ENCODE measurements at regions of chr12 and their contacts with region 1.

Region 1: DNA sequence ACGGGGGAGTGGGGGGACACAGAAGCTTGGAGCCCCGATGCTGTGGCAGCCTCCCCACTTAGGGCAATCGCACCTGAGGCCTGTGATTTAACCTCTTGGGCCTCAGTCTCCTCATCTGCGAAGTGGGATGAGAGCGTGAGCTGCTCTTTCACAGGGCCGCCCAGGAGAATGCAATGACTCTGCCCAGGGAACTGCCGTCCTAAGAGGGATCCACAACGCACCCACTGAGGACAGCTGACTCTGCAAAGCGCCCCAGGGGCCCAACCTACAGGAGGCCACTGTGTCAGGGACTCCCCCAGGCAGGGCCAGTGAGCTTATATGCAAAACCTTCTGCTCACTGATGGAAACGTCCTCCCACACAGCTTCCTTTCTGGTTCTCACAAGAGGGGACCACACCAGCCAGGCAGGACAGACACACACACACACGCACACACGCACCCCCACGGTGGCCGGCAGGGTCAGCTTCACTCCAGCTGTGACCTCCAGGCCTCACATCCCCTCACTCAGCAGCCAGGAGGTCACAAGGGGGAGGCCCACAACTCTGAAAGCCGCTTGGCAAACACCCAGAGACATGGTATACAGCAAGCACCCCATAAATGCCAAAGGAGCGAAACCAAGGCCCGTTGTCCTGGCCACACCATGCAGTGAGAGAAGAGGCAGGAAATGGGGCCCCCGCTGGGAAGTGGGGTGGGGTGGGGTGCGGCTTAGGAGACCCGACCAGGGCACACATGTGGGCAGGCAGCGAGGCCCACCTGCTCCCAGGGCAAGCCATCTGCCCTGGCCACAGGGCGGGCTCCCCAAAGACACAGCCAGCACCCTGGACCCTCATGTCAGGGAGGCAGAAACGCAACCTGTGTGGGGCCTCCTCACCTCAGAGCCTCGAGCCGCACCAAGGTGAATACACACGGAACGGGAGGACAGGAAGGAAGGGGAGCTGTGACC is 73.3 kb downstream of the NCOR2 start:
- DNase-seq: peak; percentile 59
- ATAC-seq: peak; percentile 96
- H3K4me3 Mint-ChIP-seq: peak overlapping the region; percentile 76
- H3K27ac Mint-ChIP-seq: peak overlapping the region; percentile 83
- H3K4me1 Mint-ChIP-seq: peaks cover 69% of the 10 kb centered on the region
- H3K27me3 Mint-ChIP-seq: no peaks in the 10 kb centered on the region
- CTCF ChIP-seq: no peak

Region 2: DNA sequence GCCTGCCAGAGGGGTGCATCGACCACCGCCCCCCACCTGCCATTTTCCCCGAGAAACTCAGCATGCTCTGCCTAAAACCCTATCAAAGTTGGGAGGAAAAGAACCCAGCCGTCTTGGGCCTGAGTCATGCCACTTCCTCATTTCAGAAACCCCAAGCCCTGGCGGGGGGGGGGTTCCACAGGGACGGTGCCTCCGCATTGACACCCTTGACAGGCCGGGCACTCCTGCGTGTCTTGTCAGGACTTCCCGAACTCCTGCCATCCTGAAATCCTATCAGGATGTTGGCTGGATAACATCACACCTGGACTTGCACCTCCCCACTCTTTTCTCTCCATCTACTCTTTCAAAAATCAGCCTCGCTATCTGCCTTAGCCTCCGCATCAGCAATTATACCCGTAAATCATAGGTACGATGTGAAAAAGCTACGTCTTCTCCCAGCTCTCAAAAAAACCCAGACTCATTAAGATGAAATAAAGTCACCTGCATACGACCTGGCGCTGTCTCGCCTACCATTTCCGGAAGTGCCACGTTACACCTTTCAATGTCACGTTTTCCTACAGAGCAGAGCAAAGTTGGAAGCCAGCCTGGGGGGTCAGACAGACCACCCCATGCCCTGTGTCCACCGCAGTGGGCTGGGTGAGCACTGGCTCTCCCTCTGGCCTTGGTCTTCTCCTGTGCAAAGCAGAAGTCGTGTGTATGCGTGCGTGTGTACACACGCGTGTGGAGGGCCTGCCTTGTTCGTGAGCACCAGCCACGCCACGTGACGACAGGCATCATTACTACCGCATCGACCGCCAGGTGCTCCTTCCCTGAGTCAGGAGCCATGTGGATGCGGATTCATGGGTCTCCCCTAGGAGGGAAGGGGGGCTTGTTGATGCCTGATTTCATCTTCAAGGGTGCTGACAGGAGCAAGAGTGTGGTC is 102.5 kb before region 1 on chr12:
- CTCF ChIA-PET with region 1: no interaction called
- POLR2A ChIA-PET with region 1: interaction called, 9 read pairs
- intact Hi-C with region 1: loop called (anchors 1 kb)
- DNase-seq: peak; percentile 73
- ATAC-seq: peak; percentile 77
- H3K4me3 Mint-ChIP-seq: peak overlapping the region; percentile 83
- H3K27ac Mint-ChIP-seq: peak overlapping the region; percentile 79
- H3K4me1 Mint-ChIP-seq: peaks cover 47% of the 10 kb centered on the region
- H3K27me3 Mint-ChIP-seq: no peaks in the 10 kb centered on the region
- CTCF ChIP-seq: no peak

Region 3: GRCh38 chr12:124466216-124467128 is 27.6 kb before region 1 on chr12:
- CTCF ChIA-PET with region 1: interaction called, 3 read pairs
- POLR2A ChIA-PET with region 1: interaction called, 15 read pairs
- intact Hi-C with region 1: loop called (anchors 1 kb)
- DNase-seq: peak; percentile 79
- ATAC-seq: peak; percentile 97
- H3K4me3 Mint-ChIP-seq: peak overlapping the region; percentile 71
- H3K27ac Mint-ChIP-seq: peak overlapping the region; percentile 77
- H3K4me1 Mint-ChIP-seq: peaks cover 55% of the 10 kb centered on the region
- H3K27me3 Mint-ChIP-seq: no peaks in the 10 kb centered on the region
- CTCF ChIP-seq: no peak

Region 4: GRCh38 chr12:124477107-124477915 is 16.8 kb before region 1 on chr12:
- CTCF ChIA-PET with region 1: interaction called, 4 read pairs
- POLR2A ChIA-PET with region 1: interaction called, 8 read pairs
- intact Hi-C with region 1: loop called (anchors 1 kb)
- DNase-seq: no peak
- ATAC-seq: peak; percentile 68
- H3K4me3 Mint-ChIP-seq: peak overlapping the region; percentile 57
- H3K27ac Mint-ChIP-seq: peak overlapping the region; percentile 75
- H3K4me1 Mint-ChIP-seq: peaks cover 55% of the 10 kb centered on the region
- H3K27me3 Mint-ChIP-seq: no peaks in the 10 kb centered on the region
- CTCF ChIP-seq: no peak

Region 5: DNA sequence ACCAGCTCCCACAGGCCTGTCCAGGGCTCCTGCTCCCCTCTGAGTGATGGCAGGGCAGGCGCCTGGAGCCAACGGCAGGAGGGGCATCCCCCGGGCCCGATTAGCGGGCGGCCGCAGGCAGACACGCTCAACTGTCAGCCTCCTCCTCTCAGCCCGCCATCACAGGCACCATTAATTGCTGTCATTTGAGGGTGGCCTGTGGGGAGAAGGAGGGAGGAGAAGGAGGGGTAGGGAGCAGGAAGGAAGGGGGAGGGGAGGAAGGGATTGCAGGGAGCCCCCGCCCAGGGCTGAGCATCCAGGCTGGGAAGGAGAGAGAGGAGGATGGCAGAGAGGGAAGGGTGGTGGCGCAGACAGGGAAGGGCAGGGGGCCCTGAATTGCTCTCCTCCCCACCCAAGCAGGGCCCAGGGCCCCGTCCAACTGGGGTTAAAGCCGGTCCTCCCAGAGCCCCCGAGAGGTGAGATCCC is 37.2 kb after region 1 on chr12:
- CTCF ChIA-PET with region 1: no interaction called
- POLR2A ChIA-PET with region 1: no interaction called
- intact Hi-C with region 1: no loop called
- DNase-seq: no peak
- ATAC-seq: no peak
- H3K4me3 Mint-ChIP-seq: no peak overlapping the region
- H3K27ac Mint-ChIP-seq: no peak overlapping the region
- H3K4me1 Mint-ChIP-seq: peaks cover 14% of the 10 kb centered on the region
- H3K27me3 Mint-ChIP-seq: no peaks in the 10 kb centered on the region
- CTCF ChIP-seq: no peak

Region 6: DNA sequence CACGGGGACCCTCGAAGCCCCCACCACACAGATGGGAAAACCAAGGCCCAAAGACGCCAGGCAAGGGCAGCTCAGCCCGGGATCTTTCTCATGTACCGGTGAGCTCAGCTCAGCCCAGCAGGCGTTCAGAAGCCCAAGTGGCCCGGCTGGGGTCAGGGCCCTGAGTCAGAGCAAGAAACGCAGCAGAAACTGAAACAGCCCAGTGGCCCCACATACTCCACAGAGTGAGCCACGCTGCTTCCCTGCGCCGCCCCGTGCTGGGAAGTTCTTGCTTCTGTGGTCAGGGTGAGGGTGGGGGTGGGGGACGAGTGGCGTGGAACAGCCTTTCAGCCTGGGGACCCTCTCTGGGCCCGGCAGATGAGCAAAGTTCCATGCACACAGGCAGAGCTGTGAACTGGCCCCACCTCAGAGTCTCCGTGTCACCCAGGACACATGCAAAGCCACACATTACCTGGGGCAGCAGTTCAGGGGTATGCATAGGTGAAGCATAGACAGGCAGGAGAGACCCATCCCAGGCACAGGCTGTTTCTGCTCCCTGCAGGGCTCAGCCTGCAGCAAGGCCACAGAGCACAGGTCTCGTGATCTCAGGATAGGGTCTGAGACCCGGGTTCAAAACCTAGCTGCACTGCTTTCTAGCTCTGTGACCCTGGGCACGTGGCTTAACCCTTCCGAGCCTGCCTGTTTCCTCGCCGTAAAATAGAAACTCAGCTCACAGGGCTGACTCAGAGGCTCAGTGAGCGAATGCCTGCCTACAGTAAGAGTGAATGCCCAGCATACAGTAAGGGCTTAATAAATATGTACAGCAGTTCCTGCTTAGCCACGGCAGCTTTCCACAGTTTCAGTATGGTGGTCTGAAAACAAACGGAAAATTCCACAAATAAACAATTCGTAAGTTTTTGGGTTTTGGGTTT is 51.7 kb after region 1 on chr12:
- CTCF ChIA-PET with region 1: no interaction called
- POLR2A ChIA-PET with region 1: interaction called, 3 read pairs
- intact Hi-C with region 1: loop called (anchors 5 kb)
- DNase-seq: peak; percentile 49
- ATAC-seq: peak; percentile 75
- H3K4me3 Mint-ChIP-seq: peak overlapping the region; percentile 65
- H3K27ac Mint-ChIP-seq: peak overlapping the region; percentile 69
- H3K4me1 Mint-ChIP-seq: peaks cover 70% of the 10 kb centered on the region
- H3K27me3 Mint-ChIP-seq: no peaks in the 10 kb centered on the region
- CTCF ChIP-seq: no peak

Region 7: DNA sequence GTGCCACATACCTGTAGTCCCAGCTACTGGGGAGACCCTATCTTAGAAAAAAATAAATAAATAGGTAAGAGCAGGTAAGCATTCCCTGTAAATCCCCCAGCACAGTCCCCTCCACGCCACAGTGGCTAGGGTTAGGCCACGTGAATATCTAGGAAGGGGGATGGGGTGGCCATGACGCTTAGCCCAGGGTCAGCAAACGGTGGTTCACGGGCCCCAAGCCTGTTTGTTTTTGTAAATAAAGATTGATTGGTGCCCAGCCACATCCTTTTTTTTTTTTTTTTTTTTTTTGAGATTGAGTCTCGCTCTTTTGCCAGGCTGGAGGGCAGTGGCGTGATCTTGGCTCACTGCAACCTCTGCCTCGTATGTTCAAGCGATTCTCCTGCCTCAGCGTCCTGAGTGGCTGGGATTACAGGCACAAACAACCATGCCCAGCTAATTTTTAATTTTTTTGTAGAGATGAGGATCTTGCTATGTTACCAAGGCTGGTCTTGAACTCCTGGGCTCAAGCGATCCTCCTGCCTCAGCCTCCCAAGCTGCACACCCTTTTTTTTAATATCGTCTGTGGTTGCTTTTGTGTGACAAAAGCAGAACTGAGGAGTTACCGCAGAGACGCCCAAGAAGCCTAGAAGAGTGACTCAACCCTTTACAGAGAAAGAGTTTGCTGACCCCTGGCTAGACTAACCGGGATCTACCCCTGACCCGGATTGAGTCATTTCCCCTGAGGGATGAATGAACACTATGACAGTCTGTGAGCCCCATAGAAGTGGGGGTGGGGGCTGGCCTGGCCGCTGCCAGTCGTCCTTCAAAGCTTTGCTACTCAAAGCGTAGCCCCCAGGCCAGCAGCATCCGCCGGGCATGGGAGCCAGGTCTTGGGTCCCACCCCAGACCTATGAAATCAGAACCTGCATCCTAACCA is 187.0 kb after region 1 on chr12:
- CTCF ChIA-PET with region 1: no interaction called
- POLR2A ChIA-PET with region 1: no interaction called
- intact Hi-C with region 1: loop called (anchors 5 kb)
- DNase-seq: peak; percentile 26
- ATAC-seq: peak; percentile 96
- H3K4me3 Mint-ChIP-seq: no peak overlapping the region
- H3K27ac Mint-ChIP-seq: no peak overlapping the region
- H3K4me1 Mint-ChIP-seq: peaks cover 14% of the 10 kb centered on the region
- H3K27me3 Mint-ChIP-seq: peaks cover 6% of the 10 kb centered on the region
- CTCF ChIP-seq: no peak